ENCODE measurements at regions of chr4 and their contacts with region 1.

Region 1: GRCh38 chr4:109395694-109396093 is 37.9 kb upstream of the SEC24B start:
- DNase-seq: peak in 1 of 2 experiments; percentile 60
- H3K4me3 ChIP-seq: no peak overlapping the region
- H3K27ac ChIP-seq: no peak overlapping the region
- H3K4me1 ChIP-seq: no peaks in the 10 kb centered on the region
- H3K27me3 ChIP-seq: no peaks in the 10 kb centered on the region
- CTCF ChIP-seq: no peak
- EP300 ChIP-seq: no peak
- POLR2A ChIP-seq: no peak
- RAD21 ChIP-seq: no peak

Region 2: DNA sequence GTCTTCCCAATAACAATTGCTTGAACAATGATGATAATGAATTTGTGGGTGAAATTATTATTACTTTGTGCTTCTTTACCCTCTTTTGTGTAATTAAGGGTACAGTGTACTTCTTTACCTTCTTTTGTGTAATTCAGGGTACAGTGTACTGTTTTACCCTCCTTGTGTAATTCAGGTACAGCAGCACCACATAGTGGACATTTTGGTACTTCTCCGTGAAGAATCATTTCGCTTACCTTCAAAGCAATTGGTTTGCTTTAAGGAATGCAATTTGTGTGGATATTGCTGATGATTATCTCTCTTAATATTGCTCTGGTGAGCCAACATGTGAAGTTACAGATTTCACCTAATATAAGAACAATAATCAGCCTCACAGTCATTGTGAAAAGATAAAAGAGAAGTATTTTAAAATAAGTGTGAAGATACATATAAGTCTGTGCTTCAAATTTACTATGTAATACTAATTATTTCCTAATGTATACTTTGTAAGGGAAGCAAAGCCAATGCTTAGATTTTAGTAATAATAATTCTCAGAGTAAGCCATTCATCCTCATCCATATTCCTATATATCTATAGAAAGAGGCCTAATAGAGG is 10.7 kb after region 1 on chr4:
- CTCF ChIA-PET with region 1: interaction called, 10 read pairs
- POLR2A ChIA-PET with region 1: no interaction called
- DNase-seq: no peak
- H3K4me3 ChIP-seq: no peak overlapping the region
- H3K27ac ChIP-seq: no peak overlapping the region
- H3K4me1 ChIP-seq: peaks cover 0 to 7% (median under 1%) of the 10 kb centered on the region in 4 experiments; a peak in 2 of 7 replicates
- H3K27me3 ChIP-seq: no peaks in the 10 kb centered on the region
- CTCF ChIP-seq: peak in 2 of 3 experiments; percentile 53 to 76; a peak in 3 of 4 replicates
- EP300 ChIP-seq: no peak
- POLR2A ChIP-seq: no peak
- RAD21 ChIP-seq: peak; percentile 87 to 88

Measured in H1 (cell line).